Caco-2 (cell line): ENCODE measurements at regions of chr12 and their contacts with region 1.

Region 1: GRCh38 chr12:117025481-117026151 is 73.6 kb downstream of the TESC start:
- DNase-seq: peak; percentile 70 to 80
- H3K4me3 ChIP-seq: no peak overlapping the region
- H3K4me3 Mint-ChIP-seq: no peak overlapping the region
- H3K27ac Mint-ChIP-seq: peak overlapping the region; percentile 66
- H3K4me1 ChIP-seq: peaks cover 6% of the 10 kb centered on the region; the same call in 1 of the 2 replicates
- H3K4me1 Mint-ChIP-seq: no peaks in the 10 kb centered on the region
- H3K27me3 ChIP-seq: no peaks in the 10 kb centered on the region
- H3K27me3 Mint-ChIP-seq: no peaks in the 10 kb centered on the region
- CTCF ChIP-seq: peak; percentile 80 to 87

Region 2: DNA sequence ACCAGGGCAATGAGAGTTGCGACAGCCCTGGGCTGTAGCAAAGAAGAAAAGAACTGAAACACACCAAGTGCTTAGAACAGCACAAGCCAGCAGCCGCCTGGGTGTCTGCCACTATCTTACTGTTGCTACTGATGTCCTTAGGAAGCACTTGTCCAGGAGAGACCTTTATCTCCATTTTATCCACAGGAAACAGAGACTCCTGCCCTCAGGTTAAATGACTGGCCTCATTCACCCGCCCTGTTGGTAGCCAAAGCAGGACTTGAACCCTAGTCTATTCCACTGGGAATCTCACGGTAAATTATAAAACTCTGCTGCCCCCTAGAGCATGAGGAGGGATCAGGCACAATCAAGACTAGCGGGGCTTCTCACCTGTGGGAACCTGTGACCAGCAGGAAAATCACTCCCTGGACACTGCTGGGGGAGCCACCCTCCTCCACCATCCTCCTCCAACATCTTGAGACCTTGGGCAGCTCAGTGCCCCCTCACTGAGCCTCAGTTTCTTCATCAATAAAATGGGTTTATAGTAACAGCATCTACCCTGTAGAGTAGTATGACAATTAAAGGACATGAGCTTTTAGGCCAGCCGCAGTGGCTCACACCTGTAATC is 94.1 kb after region 1 on chr12:
- CTCF ChIA-PET with region 1: interaction called, 5 read pairs
- POLR2A ChIA-PET with region 1: no interaction called
- intact Hi-C with region 1: loop called (anchors 1 kb)
- DNase-seq: peak; percentile 40 to 56
- H3K4me3 ChIP-seq: no peak overlapping the region
- H3K4me3 Mint-ChIP-seq: no peak overlapping the region
- H3K27ac Mint-ChIP-seq: peak overlapping the region; percentile 75
- H3K4me1 ChIP-seq: peaks cover 20% of the 10 kb centered on the region
- H3K4me1 Mint-ChIP-seq: peaks cover 10% of the 10 kb centered on the region
- H3K27me3 ChIP-seq: no peaks in the 10 kb centered on the region
- H3K27me3 Mint-ChIP-seq: no peaks in the 10 kb centered on the region
- CTCF ChIP-seq: peak; percentile 56 to 61

Region 3: DNA sequence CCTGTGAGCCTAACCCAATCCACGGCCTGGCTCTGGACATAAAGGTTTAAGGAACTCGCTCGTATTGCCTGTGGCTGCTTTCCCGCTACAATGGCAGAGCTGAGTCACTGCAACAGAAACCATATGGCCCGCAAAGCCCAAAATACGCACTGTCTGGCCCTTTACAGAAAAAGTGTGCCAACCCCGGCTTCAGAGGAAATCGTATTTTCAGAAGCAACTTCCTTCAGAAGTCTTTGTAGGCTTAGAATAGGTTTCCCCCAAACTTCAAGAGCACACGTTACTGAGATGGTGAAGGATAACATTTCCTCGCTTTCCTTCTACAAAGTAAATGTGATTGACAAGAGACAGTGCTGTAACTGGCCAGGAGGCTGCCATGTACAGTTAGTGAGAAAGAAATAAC is 108.4 kb after region 1 on chr12:
- CTCF ChIA-PET with region 1: interaction called, 9 read pairs
- POLR2A ChIA-PET with region 1: no interaction called
- intact Hi-C with region 1: loop called (anchors 1 kb)
- DNase-seq: no peak
- H3K4me3 ChIP-seq: no peak overlapping the region
- H3K4me3 Mint-ChIP-seq: no peak overlapping the region
- H3K27ac Mint-ChIP-seq: no peak overlapping the region
- H3K4me1 ChIP-seq: no peaks in the 10 kb centered on the region; the same call in 1 of the 2 replicates
- H3K4me1 Mint-ChIP-seq: no peaks in the 10 kb centered on the region
- H3K27me3 ChIP-seq: no peaks in the 10 kb centered on the region
- H3K27me3 Mint-ChIP-seq: no peaks in the 10 kb centered on the region
- CTCF ChIP-seq: no peak

Region 4: DNA sequence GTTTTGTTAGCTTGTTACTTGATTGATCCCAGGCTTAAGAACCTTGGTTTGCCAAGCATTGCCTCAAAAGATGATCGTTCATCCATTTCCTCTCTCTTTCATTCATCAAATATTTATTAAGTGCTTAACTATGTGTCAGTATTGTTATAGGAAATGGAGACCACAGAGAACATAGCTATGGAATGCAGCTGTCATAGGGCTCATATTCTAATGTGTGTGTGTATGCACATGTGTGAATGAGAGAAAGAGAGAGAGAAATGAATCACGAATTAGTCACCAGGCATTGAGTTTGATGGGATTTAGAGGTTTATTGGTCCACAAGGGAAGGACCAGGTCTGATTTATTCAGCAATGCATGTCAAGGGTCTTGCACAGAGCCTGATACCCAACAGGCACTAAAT is 235.6 kb after region 1 on chr12:
- CTCF ChIA-PET with region 1: no interaction called
- POLR2A ChIA-PET with region 1: no interaction called
- intact Hi-C with region 1: no loop called
- DNase-seq: no peak
- H3K4me3 ChIP-seq: no peak overlapping the region
- H3K4me3 Mint-ChIP-seq: no peak overlapping the region
- H3K27ac Mint-ChIP-seq: no peak overlapping the region
- H3K4me1 ChIP-seq: no peaks in the 10 kb centered on the region
- H3K4me1 Mint-ChIP-seq: no peaks in the 10 kb centered on the region
- H3K27me3 ChIP-seq: no peaks in the 10 kb centered on the region
- H3K27me3 Mint-ChIP-seq: peaks cover 15% of the 10 kb centered on the region
- CTCF ChIP-seq: no peak